Stomach (tissue), 19 donors: ENCODE measurements at regions of chr1 and their contacts with region 1.

Region 1: GRCh38 chr1:55277377-55278130 is 62.4 kb upstream of the USP24 start:
- DNase-seq: peak; percentile 87 to 93
- H3K4me3 ChIP-seq: no peak overlapping the region
- H3K27ac ChIP-seq: no peak overlapping the region
- H3K4me1 ChIP-seq: peaks cover 0 to 24% (median 17%) of the 10 kb centered on the region in 4 donors
- H3K27me3 ChIP-seq: no peaks in the 10 kb centered on the region
- CTCF ChIP-seq: peak in 5 of 7 experiments; percentile 82 to 89 (median 83)
- EP300 ChIP-seq: no peak
- POLR2A ChIP-seq: no peak

Region 2: GRCh38 chr1:55140546-55140983 is 137.0 kb before region 1 on chr1:
- intact Hi-C with region 1: loop called (anchors 5 kb)
- DNase-seq: peak; percentile 56 to 94
- H3K4me3 ChIP-seq: no peak overlapping the region
- H3K27ac ChIP-seq: peak overlapping the region in 1 of 5 donors; percentile 7
- H3K4me1 ChIP-seq: peaks cover 0 to 8% (median 0%) of the 10 kb centered on the region in 4 donors
- H3K27me3 ChIP-seq: no peaks in the 10 kb centered on the region
- CTCF ChIP-seq: peak in 5 of 7 experiments; percentile 51 to 77 (median 66)
- EP300 ChIP-seq: no peak
- POLR2A ChIP-seq: no peak

Region 3: DNA sequence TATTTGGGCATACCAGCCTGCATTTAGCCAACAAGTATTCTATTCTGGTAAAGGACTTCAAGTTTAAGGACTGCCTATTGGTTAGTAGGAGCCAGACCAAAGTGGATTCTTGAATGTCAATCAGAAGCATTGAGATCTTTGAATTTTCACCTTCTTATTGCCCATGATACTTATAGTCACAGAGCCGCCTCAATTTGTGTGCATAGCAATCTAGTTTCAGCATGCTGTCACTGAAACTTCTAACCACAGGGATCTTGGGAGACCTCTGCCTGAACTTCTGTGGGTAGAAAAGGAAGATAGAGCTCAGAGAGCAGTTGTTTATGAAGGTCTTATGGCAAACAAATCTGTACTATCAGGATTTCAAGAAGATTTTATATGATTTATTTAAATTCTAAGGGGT is 439.1 kb after region 1 on chr1:
- intact Hi-C with region 1: no loop called
- DNase-seq: no peak
- H3K4me3 ChIP-seq: no peak overlapping the region
- H3K27ac ChIP-seq: peak overlapping the region in 1 of 5 donors; percentile 12
- H3K4me1 ChIP-seq: peaks cover 0 to 35% (median 14%) of the 10 kb centered on the region in 4 donors
- H3K27me3 ChIP-seq: no peaks in the 10 kb centered on the region
- CTCF ChIP-seq: no peak
- EP300 ChIP-seq: no peak
- POLR2A ChIP-seq: no peak